Endothelial cell of umbilical vein (primary cell): ENCODE measurements at regions of chr20 and their contacts with region 1.

Region 1: DNA sequence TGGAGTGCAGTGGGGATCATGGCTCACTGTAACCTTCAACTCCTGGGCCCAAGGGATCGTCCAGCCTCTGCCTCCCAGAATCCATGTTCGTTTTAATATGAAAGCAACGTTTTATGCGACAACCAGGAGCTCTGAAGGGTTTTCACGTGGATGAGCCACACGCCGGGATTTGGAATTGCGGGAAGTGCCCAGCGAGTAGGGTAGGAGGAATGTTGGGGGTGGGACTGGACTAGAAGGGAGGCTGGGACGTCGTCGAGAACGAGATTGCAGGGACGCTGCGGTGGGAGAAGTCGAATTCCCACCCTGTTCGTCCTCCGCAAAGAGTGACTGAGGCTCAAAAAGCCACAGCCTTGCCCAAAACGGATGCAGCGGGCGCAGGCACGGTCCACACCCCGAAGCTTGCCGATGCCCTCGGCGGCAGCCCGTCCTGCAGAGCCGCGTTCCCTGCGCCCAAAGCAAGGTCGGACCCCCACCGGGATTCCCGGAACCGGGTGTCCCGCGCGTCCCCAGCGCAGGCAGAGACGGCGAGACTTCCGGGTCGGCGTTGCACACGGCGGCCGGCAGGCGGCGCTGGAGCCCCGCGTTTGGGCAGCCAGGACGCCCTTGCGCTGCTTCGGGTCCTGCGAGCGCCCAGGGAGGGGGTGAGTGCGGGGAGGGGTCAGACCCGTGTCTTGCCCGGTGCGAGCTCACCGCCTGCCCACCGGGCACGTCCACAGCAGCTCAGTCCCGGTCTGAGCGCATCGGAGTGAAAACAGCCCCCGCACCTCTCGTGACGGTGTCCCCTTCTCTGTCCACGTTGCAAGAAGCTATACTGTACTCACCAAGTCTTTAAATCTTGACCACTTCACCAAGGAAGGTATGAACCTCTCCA is 87.8 kb downstream of the DHX35 start:
- DNase-seq: peak; percentile 75
- H3K4me3 ChIP-seq: peak overlapping the region in 2 of 3 experiments; percentile 36 to 63
- H3K27ac ChIP-seq: no peak overlapping the region
- H3K4me1 ChIP-seq: peaks cover 3% of the 10 kb centered on the region
- H3K27me3 ChIP-seq: no peaks in the 10 kb centered on the region
- CTCF ChIP-seq: peak; percentile 97 to 98
- POLR2A ChIP-seq: peak; percentile 64

Region 2: GRCh38 chr20:38730989-38731737 is 318.8 kb before region 1 on chr20:
- CTCF ChIA-PET with region 1: interaction called, 4 read pairs
- POLR2A ChIA-PET with region 1: no interaction called
- dilution Hi-C with region 1: no loop called
- intact Hi-C with region 1: loop called (anchors 2 kb)
- DNase-seq: peak; percentile 60
- H3K4me3 ChIP-seq: no peak overlapping the region
- H3K27ac ChIP-seq: no peak overlapping the region
- H3K4me1 ChIP-seq: peaks cover 6% of the 10 kb centered on the region
- H3K27me3 ChIP-seq: peaks cover 65 to 80% of the 10 kb centered on the region in 2 experiments
- CTCF ChIP-seq: peak; percentile 99
- POLR2A ChIP-seq: no peak

Region 3: GRCh38 chr20:38962044-38962927 is 87.6 kb before region 1 on chr20 and contains the start of gene DHX35:
- CTCF ChIA-PET with region 1: interaction called, 15 read pairs
- POLR2A ChIA-PET with region 1: no interaction called
- dilution Hi-C with region 1: no loop called
- intact Hi-C with region 1: loop called (anchors 1 kb)
- DNase-seq: peak; percentile 97
- H3K4me3 ChIP-seq: peak within 1 kb of the TSS; percentile 71 to 95 (median 84)
- H3K27ac ChIP-seq: peak within 1 kb of the TSS; percentile 62
- H3K4me1 ChIP-seq: peaks cover 19% of the 10 kb centered on the region
- H3K27me3 ChIP-seq: no peaks in the 10 kb centered on the region
- CTCF ChIP-seq: peak; percentile 11 to 52
- POLR2A ChIP-seq: peak; percentile 72
- total RNA-seq, gene DHX35: 9.8 and 10.0 TPM in 2 replicates

Region 4: DNA sequence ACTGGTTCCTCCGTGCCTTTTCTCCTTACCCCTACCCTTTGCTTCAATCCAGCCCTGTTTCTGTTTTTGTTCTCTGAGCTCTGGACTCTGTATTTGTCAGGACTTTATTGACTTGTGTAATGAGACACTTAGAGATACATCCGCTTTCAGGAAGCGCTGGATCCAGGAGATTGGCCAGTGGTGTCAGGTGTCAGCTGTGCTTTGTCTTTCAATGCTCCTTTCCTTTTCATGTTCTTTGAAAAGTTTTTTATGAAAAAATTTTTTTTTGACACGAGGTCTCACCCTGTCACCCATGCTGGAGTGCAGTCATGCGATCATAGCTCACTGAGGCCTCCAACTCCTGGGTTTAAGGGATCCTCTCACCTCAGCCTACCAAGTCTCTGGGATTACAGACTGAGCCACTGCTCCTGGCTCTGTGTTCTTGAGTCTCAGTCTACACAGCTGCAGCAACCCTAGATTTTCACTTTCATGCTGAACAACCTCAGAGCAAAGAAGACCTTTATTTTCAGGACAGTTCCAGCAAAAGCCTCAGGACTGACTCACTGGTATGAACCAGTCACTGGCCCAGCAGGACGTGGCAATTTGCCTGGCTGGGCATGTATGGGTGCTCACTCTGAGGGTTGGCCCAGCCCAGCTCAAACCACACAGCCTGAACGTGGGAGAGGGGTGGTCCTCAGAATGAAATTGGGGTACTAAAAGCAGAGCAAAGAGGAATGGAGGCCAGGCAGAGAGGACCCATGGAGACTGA is 20.7 kb after region 1 on chr20:
- CTCF ChIA-PET with region 1: interaction called, 52 read pairs
- POLR2A ChIA-PET with region 1: no interaction called
- dilution Hi-C with region 1: no loop called
- intact Hi-C with region 1: no loop called
- DNase-seq: peak; percentile 25
- H3K4me3 ChIP-seq: no peak overlapping the region
- H3K27ac ChIP-seq: no peak overlapping the region
- H3K4me1 ChIP-seq: no peaks in the 10 kb centered on the region
- H3K27me3 ChIP-seq: peaks cover 3 to 8% of the 10 kb centered on the region in 2 experiments
- CTCF ChIP-seq: no peak
- POLR2A ChIP-seq: no peak

Region 5: DNA sequence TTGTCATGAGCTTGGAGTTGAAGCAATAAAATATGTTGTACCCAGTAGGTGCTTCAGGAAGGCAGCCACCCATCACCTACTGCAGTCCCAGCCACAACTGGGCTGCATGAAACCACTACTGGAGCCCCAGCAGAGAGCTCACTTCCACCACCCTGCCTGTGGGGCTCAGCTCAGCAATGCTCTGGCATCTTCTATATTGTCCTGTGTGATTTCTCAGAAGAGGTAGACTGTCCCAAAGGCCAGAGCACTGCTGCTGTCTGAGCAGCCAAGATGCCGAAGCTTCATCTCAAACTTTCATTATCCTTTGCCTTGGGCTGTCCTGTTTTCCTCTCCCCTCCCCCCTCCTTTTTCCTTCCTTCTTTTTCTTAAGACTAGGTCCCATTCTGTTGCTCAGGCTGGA is 39.1 kb after region 1 on chr20:
- CTCF ChIA-PET with region 1: interaction called, 24 read pairs
- POLR2A ChIA-PET with region 1: no interaction called
- dilution Hi-C with region 1: no loop called
- intact Hi-C with region 1: no loop called
- DNase-seq: no peak
- H3K4me3 ChIP-seq: no peak overlapping the region
- H3K27ac ChIP-seq: no peak overlapping the region
- H3K4me1 ChIP-seq: no peaks in the 10 kb centered on the region
- H3K27me3 ChIP-seq: no peaks in the 10 kb centered on the region
- CTCF ChIP-seq: no peak
- POLR2A ChIP-seq: no peak

Region 6: GRCh38 chr20:39874049-39874888 is 824.4 kb after region 1 on chr20:
- CTCF ChIA-PET with region 1: interaction called, 12 read pairs
- POLR2A ChIA-PET with region 1: no interaction called
- dilution Hi-C with region 1: no loop called
- intact Hi-C with region 1: no loop called
- DNase-seq: peak; percentile 90
- H3K4me3 ChIP-seq: peak overlapping the region in 1 of 3 experiments; percentile 32
- H3K27ac ChIP-seq: no peak overlapping the region
- H3K4me1 ChIP-seq: peaks cover 2% of the 10 kb centered on the region
- H3K27me3 ChIP-seq: peaks cover 0 to 2% of the 10 kb centered on the region in 2 experiments
- CTCF ChIP-seq: peak; percentile 96 to 98
- POLR2A ChIP-seq: no peak